ENCODE measurements at regions of chr5 and their contacts with region 1.

Region 1: DNA sequence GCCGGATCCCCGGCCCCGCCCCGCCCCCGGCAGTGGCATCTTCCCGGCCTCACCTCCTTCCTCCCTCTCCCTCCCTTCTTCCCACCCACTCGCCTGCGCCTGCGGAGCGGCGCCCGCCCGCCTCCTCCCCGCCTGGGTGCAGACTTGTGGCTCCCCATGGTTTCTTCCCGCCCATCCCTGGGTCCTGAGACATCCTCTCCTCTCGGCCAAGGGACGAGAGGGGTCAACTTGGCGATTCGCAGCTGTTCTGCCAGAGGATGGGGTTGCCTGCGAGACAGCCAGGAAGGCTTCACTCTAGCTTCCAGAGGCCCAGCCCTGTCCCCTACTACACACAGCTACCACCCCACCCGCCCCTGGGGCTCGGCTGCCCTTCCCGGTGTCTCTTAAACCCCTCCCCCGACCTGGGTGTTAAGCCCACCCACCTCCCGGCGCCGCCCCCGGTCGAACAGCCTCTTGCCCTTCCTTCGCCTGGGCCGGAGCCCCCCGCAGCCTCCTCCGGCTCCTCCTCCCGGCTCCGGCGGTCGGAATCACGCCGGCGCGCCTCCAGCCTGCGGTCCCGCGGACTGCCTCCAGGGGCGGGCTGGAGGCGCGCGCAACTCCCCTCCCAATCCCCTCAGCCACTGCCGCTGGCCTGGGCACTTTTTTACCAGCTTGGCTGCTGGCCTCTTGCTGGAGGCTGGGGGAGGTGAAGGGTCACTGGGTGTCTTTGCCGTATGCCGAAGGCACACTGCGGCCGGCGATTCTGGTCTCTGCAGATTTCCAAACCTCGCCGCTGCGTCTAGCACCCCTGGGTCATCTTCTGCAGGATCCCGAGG is 1.9 kb downstream of the JADE2 start:
- DNase-seq: peak; percentile 92
- ATAC-seq: peak; percentile 71

Region 2: GRCh38 chr5:134370871-134371833 is 156.2 kb before region 1 on chr5 and contains the start of gene UBE2B:
- intact Hi-C with region 1: loop called (anchors 5 kb)
- DNase-seq: peak; percentile 99
- ATAC-seq: peak; percentile 95
- total RNA-seq, gene UBE2B: 236 TPM

Region 3: DNA sequence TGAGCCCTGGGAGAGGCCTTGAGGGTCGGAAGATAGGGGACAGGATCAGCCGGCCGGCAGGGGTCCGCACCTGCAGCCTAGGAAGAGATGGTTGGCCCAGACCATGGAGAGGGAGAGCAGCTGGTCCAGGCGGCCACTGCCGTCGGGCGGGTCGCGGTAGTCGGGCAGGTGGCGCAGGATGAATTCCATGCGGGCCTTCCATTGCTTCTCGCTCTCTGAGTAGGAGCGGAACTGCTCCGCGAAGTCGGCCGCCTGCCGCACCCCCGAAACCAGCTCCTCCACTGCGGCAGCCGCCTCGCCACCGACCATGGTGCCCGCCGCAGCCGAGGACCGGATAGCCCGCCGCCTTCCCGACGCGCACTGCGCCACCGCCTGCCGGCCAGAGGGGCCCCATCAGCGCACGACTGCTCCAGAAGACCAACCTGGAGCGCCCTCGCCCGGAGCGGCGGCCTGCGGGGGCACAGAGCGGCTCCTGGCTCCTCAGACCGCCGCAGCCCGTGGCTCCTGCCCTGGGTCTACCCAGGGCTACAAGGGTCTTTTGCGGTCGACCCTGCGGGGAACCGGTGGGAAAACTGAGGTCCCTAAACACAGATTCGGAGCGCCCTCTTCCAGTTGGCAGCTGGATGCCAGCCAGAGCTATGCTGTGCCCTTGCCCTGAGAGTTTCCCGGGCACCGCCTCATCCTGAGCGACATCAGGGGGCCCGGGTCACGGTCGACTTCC is 115.6 kb before region 1 on chr5 and contains the start of gene CDKN2AIPNL:
- intact Hi-C with region 1: loop called (anchors 5 kb)
- DNase-seq: peak; percentile 96
- ATAC-seq: peak; percentile 100
- total RNA-seq, gene CDKN2AIPNL: 43.1 TPM

Region 4: DNA sequence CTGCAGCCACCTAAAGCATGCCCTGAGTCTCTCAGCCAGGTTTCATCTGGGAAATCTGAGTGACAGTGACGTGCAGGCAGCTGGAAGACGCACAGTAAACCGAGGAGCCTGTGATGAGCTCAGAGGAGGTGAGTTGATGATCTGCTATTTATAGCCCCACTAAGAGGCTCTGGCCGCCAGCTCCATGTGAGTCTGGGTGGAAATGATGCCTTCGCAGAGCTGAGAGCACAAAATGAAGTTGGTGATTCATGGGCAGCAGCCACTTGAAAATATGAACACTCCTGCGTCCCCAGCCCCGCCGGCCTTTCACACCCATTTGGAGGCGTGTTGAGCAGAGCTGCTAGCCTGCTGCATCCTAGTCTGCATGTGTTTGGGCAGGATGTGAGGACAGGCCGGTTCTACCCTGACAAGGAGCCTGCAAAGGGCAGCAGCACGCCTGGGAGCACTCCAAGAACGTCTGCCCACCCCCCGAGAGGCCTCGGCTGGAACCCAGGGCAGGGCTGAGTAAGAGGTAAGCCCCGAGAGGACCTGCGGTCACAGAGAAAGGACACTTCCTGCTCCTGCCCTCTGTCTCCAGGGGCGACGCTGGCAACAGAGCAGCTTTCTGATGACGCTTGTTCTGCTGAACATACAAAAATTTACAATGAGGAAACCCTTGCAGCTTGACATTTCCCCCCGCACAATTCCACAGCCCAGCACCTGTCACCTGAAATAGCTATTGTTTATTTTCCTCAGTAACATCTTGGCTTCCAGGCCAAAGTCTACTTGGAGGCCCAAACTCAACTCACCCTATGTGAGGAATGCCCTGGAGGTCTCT is 90.6 kb before region 1 on chr5:
- intact Hi-C with region 1: loop called (anchors 5 kb)
- DNase-seq: peak; percentile 76
- ATAC-seq: peak; percentile 78

Region 5: GRCh38 chr5:134465816-134466240 is 61.5 kb before region 1 on chr5:
- intact Hi-C with region 1: loop called (anchors 2 kb)
- DNase-seq: peak; percentile 95
- ATAC-seq: peak; percentile 90

Region 6: DNA sequence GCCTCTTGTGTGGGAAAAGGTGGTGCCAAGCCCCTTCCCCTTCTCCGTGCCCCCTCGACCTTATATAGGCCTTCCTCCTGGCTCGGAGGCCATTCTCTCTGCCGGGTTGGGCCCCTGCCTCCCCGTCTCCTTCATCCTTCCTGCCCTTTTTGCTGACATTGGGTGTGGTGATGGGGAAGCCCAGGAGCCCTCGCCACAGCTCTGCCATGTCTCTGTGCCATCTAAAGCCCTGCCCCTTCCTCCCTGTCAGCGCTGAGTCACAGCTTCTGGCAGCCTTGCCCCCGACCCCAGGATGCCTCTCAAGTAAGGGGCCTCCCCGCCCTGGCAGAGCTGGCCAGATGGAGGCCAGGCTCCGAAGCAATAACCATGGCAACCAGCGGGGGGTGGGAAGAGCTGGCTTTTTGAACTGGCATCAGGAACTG is 28.5 kb after region 1 on chr5:
- intact Hi-C with region 1: no loop called
- DNase-seq: peak; percentile 79
- ATAC-seq: no peak

Region 7: DNA sequence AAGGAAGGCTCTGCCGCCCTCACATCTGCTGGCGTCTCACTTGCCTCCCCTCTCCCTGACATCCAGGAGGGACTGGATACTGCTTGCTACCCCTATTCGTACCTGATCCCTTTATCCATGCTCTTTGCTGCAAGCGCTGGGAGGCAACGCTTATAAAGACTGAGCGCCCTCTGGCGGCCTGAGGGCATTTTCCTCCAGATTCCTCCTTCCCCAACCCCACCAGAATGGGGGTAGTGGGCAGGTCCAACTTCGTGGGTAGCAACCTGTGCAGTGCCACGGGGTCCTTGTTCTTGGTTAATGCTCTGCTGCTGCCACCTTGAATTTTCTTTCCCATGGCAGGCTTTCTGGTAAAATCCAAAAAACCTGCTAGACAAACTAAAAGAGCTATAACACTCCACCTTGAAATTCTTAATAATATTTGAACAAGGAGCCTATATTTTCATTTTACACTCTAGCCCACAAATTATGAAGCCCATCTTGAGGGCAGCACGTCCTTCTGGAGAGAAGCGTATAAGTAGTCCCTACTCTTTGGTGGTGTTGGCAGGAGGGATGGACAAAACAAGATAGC is 50.5 kb after region 1 on chr5:
- intact Hi-C with region 1: loop called (anchors 5 kb)
- DNase-seq: peak; percentile 90
- ATAC-seq: peak; percentile 55